ENCODE measurements at regions of chr7 and their contacts with region 1.

Region 1: DNA sequence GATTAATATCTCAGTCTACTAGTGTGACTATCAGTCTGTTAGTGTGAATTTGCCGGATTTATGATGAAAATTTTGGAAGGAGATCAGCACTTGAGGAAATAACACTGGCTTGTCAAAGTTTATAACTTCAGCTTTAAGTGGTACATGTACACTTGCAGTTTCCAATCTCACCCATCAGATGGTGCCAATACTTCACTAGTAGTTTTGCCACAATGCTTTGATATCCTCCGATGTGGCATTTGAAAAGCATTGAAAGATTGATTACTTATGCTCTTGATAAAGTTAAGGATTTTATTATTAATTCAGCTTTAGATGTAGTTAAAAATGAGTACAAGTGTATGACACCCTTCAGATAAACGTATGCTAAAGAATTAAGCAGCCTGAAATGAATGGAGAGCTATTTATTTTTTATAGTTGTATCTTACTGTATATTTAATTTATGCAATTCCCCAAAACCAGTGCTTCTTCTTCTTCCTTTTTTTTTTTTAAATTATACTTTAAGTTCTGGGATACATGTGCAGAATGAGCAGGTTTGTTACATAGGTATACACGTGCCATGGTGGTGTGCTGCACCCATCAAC is 98.2 kb downstream of the ANLN start:
- DNase-seq: peak in 22 of 35 experiments; percentile 8 to 81 (median 28)
- ATAC-seq: peak in 3 of 4 experiments; percentile 60 to 71 (median 70)
- H3K4me3 ChIP-seq: no peak overlapping the region
- H3K4me3 Mint-ChIP-seq: no peak overlapping the region
- H3K27ac ChIP-seq: no peak overlapping the region
- H3K27ac Mint-ChIP-seq: peak overlapping the region in 1 of 2 donors; percentile 61
- H3K4me1 ChIP-seq: no peaks in the 10 kb centered on the region
- H3K4me1 Mint-ChIP-seq: peaks cover 0 to 2% (median 1%) of the 10 kb centered on the region in 3 donors
- H3K27me3 ChIP-seq: peaks cover 0 to 2% of the 10 kb centered on the region in 2 experiments
- H3K27me3 Mint-ChIP-seq: peaks cover 0 to 3% of the 10 kb centered on the region in 2 donors

Region 2: DNA sequence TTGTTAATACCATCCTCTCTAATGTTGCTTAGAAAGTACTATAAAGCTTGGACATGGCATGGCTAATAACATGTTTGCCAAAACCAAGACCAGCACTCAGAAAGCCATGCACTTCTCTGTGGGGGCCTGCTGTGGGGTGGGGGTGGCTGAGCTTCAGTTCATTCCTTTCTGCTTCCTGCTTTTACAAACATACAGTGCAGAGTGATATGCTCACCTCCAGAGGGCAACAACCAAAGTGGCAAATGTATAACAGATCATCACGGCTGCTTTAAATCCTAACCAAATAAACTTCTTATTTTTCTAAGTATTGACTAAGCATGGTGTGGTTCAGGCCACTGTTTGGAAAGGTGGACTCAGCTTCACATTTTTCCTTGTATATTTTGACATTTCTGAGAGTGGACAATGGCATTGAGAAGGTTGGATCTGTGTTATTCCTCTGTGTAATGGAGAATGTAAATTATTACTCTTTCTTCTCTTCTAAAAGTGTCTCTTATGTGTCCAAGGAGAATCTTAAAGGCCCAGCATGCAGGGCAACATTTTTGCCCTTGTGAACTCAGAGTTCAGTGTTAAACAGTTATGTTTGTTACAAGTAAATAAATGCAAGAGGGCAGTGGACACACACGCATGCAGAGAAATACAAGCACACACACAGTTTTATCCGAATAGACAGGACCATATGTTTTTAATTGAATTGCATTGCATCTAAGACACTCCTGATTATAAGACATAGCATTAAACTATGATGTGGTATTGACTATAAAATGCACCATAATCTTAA is 979.0 kb before region 1 on chr7:
- CTCF ChIA-PET with region 1: interaction called in 1 of 2 experiments, 12 read pairs
- POLR2A ChIA-PET with region 1: no interaction called
- DNase-seq: no peak
- ATAC-seq: no peak
- H3K4me3 ChIP-seq: no peak overlapping the region
- H3K4me3 Mint-ChIP-seq: no peak overlapping the region
- H3K27ac ChIP-seq: no peak overlapping the region
- H3K27ac Mint-ChIP-seq: no peak overlapping the region
- H3K4me1 ChIP-seq: no peaks in the 10 kb centered on the region
- H3K4me1 Mint-ChIP-seq: no peaks in the 10 kb centered on the region
- H3K27me3 ChIP-seq: peaks cover 0 to 9% of the 10 kb centered on the region in 2 experiments
- H3K27me3 Mint-ChIP-seq: peaks cover 13 to 22% of the 10 kb centered on the region in 2 donors

Region 3: GRCh38 chr7:36670585-36671431 is 183.0 kb after region 1 on chr7:
- CTCF ChIA-PET with region 1: interaction called, 6 to 24 read pairs
- POLR2A ChIA-PET with region 1: no interaction called
- DNase-seq: peak; percentile 51 to 91 (median 66)
- ATAC-seq: peak; percentile 83 to 92 (median 87)
- H3K4me3 ChIP-seq: no peak overlapping the region
- H3K4me3 Mint-ChIP-seq: peak overlapping the region in 1 of 3 donors; percentile 42
- H3K27ac ChIP-seq: no peak overlapping the region
- H3K27ac Mint-ChIP-seq: peak overlapping the region; percentile 44 to 62
- H3K4me1 ChIP-seq: peaks cover 4 to 29% of the 10 kb centered on the region in 2 experiments
- H3K4me1 Mint-ChIP-seq: peaks cover 27 to 38% (median 30%) of the 10 kb centered on the region in 3 donors
- H3K27me3 ChIP-seq: no peaks in the 10 kb centered on the region
- H3K27me3 Mint-ChIP-seq: no peaks in the 10 kb centered on the region

Region 4: GRCh38 chr7:37201003-37201875 is 713.4 kb after region 1 on chr7:
- CTCF ChIA-PET with region 1: interaction called, 24 to 47 read pairs
- POLR2A ChIA-PET with region 1: no interaction called
- DNase-seq: peak in 25 of 35 experiments; percentile 4 to 65 (median 25)
- ATAC-seq: peak in 1 of 4 experiments; percentile 22
- H3K4me3 ChIP-seq: no peak overlapping the region
- H3K4me3 Mint-ChIP-seq: no peak overlapping the region
- H3K27ac ChIP-seq: no peak overlapping the region
- H3K27ac Mint-ChIP-seq: peak overlapping the region in 1 of 2 donors; percentile 71
- H3K4me1 ChIP-seq: peaks cover 0 to 2% of the 10 kb centered on the region in 2 experiments
- H3K4me1 Mint-ChIP-seq: peaks cover 4 to 11% (median 4%) of the 10 kb centered on the region in 3 donors
- H3K27me3 ChIP-seq: no peaks in the 10 kb centered on the region
- H3K27me3 Mint-ChIP-seq: no peaks in the 10 kb centered on the region

Measured in T-cell (primary cell).